ENCODE measurements at regions of chr6 and their contacts with region 1.

Region 1: GRCh38 chr6:137749696-137750211 is 117.3 kb upstream of the TNFAIP3 start:
- DNase-seq: no peak
- CTCF ChIP-seq: no peak

Region 2: DNA sequence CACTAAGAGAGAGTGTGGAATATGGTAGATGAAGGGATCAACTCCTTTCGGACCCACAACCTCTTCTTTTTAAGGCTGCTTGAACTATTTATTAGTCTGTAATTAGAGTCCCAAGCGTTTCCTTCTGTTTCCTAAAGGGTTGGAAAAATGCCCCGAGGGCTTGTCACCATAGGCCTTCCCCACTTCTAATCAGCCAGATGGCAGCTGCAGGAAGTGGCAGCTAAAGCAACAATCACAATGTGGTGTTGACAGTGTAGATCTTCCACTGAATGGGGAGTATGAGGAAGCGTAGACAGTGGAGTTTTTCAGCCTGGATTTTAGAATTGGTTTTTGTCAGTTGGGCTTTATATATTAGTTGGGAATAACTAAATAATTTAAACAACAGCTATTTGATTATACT is 787.1 kb before region 1 on chr6:
- CTCF ChIA-PET with region 1: no interaction called
- POLR2A ChIA-PET with region 1: no interaction called
- DNase-seq: no peak
- CTCF ChIP-seq: no peak

Region 3: GRCh38 chr6:137602313-137603270 is 147.2 kb before region 1 on chr6:
- CTCF ChIA-PET with region 1: no interaction called
- POLR2A ChIA-PET with region 1: no interaction called
- DNase-seq: no peak
- CTCF ChIP-seq: no peak

Region 4: DNA sequence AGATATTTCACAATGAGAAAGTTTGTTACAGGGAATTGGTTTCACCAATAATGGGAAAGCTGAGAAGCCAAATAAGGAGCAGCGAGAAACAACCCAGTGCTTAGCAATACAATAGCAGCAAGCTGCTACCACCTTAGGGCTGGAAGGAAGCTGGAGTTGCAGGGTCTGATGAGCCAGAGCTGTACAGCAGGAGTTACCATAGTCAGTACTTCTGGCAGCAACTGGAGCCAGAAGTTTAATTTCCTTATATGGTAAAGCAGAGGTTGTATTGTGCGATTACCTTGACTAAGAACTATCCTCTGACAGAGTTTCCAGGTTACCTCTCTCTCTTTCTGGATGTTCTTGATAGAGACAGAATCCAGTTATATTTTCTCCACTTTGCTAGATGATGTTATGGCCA is 118.4 kb before region 1 on chr6:
- CTCF ChIA-PET with region 1: no interaction called
- POLR2A ChIA-PET with region 1: no interaction called
- DNase-seq: no peak
- CTCF ChIP-seq: no peak

Region 5: GRCh38 chr6:137761103-137761886 is 11.5 kb after region 1 on chr6:
- CTCF ChIA-PET with region 1: interaction called, 11 read pairs
- POLR2A ChIA-PET with region 1: no interaction called
- DNase-seq: no peak
- CTCF ChIP-seq: no peak

Measured in GM10248 (cell line).